ENCODE measurements at regions of chr6 and their contacts with region 1.

Region 1: GRCh38 chr6:21946298-21946783 is 350.5 kb downstream of the PRL start:
- DNase-seq: no peak
- H3K4me3 Mint-ChIP-seq: no peak overlapping the region
- H3K27ac Mint-ChIP-seq: no peak overlapping the region
- H3K4me1 Mint-ChIP-seq: peaks cover 4% of the 10 kb centered on the region
- H3K27me3 Mint-ChIP-seq: peaks cover 1% of the 10 kb centered on the region

Region 2: GRCh38 chr6:21664314-21665109 is 281.8 kb before region 1 on chr6:
- intact Hi-C with region 1: loop called (anchors 10 kb)
- DNase-seq: no peak
- H3K4me3 Mint-ChIP-seq: peak overlapping the region; percentile 51
- H3K27ac Mint-ChIP-seq: no peak overlapping the region
- H3K4me1 Mint-ChIP-seq: peaks cover 22% of the 10 kb centered on the region
- H3K27me3 Mint-ChIP-seq: peaks cover 69% of the 10 kb centered on the region

Region 3: DNA sequence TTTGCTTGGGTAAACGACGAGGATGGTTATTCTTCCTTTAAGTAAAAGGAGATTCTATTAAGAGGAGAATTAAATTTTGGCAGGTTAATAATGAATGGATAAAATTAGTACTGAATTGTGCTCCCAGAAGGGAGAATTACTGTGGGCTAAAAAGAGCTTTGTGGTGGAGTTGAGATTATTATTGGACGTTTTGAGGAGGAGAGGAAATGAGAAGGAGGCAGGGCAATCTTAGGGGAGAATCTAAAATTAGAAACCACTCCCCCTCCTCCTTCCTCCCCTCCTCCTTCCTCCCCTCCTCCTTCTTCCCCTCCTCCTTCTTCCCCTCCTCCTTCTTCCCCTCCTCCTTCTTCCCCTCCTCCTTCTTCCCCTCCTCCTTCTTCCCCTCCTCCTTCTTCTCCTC is 18.7 kb after region 1 on chr6:
- intact Hi-C with region 1: no loop called
- DNase-seq: no peak
- H3K4me3 Mint-ChIP-seq: no peak overlapping the region
- H3K27ac Mint-ChIP-seq: no peak overlapping the region
- H3K4me1 Mint-ChIP-seq: peaks cover 5% of the 10 kb centered on the region
- H3K27me3 Mint-ChIP-seq: no peaks in the 10 kb centered on the region

Measured in activated T-helper 1 cell treated with anti-CD3 and anti-CD28 coated beads, Interleukin-12 subunit alpha, Interleukin-12 subunit beta, Interleukin-2, Interleukin-4 antibody, amounts not matched to agents 30 ng/mL and 10 ng/mL and 1 ng/mL, durations not matched to agents 14 hours and 24 hours and 36 hours (primary cell).